ENCODE measurements at regions of chr14 and their contacts with region 1.

Region 1: GRCh38 chr14:76918751-76919543 is 92.7 kb downstream of the LRRC74A start:
- DNase-seq: peak; percentile 24
- ATAC-seq: peak; percentile 77
- H3K4me3 ChIP-seq: peak overlapping the region; percentile 9 to 61 (median 39); a peak in 3 of 6 replicates
- H3K27ac ChIP-seq: no peak overlapping the region
- H3K4me1 ChIP-seq: peaks cover 53% of the 10 kb centered on the region
- H3K27me3 ChIP-seq: peaks cover 3 to 18% of the 10 kb centered on the region in 2 experiments; a peak in 3 of 5 replicates
- CTCF ChIP-seq: no peak
- EP300 ChIP-seq: no peak
- POLR2A ChIP-seq: no peak
- RAD21 ChIP-seq: no peak

Region 2: DNA sequence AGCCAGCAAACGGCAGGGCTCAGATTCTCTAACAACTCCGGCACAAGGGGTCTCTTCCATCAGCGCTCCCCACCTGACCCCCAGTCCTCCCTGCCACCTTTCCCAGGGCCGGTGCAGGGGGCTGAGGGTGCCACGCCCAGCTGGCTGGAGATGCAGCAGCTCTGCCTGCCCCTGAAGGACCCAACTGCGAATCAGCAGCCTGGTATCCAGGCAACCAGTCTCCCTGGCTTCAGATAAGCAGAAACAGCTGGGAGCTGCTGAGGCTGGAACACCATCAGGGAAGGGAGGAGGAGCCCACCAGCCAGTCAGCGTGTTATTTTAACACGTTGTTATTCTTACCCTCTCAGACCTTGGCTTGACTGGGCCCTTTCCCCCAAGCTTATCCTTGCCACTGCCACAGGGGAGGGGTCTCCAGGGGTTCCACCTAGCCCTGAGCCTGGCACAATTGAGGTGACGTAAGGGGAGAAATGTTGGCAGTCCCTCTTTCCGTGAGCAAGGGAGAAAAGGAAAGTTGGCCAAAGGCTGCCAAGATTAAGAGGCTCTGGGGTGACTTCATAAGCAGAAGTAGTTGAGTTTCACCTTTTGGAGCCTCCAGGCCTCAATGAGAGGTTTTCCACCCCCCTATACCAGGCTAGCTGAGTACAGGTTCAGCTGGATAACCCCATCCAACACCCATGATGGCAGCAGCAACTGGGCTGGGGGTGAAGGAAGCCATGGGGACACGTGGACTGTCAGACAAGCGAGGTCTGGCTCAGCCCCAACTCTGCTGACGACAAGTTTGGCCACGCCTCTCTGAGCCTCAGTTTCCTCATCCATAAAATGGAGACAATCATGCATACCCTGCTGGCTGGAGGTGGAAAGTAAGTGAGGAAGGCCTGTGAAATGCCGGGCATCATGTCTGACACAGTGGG is 18.5 kb after region 1 on chr14:
- CTCF ChIA-PET with region 1: no interaction called
- POLR2A ChIA-PET with region 1: no interaction called
- in situ Hi-C with region 1: no loop called
- intact Hi-C with region 1: no loop called
- DNase-seq: no peak
- ATAC-seq: no peak
- H3K4me3 ChIP-seq: no peak overlapping the region
- H3K27ac ChIP-seq: no peak overlapping the region
- H3K4me1 ChIP-seq: peaks cover 13% of the 10 kb centered on the region; the same call in 1 of the 2 replicates
- H3K27me3 ChIP-seq: peaks cover 8 to 33% of the 10 kb centered on the region in 2 experiments; a peak in 3 of 5 replicates
- CTCF ChIP-seq: no peak
- EP300 ChIP-seq: no peak
- POLR2A ChIP-seq: no peak
- RAD21 ChIP-seq: no peak

Region 3: DNA sequence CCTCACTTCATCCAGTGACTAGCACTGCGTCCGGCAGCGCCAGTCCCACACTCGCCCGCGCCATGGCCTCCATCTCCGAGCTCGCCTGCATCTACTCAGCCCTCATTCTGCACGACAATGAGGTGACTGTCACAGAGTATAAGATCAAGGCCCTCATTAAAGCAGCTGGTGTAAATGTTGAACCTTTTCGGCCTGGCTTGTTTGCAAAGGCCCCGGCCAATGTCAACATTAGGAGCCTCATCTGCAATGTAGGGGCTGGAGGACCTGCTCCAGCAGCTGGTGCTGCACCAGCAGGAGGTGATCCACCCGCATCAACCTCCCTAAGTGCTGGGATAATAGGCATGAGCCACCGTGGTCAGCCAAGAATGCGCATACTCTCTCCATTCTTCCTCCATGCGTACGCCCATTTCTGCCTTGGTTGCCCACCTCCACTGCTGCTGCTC is 49.7 kb after region 1 on chr14:
- CTCF ChIA-PET with region 1: no interaction called
- POLR2A ChIA-PET with region 1: no interaction called
- in situ Hi-C with region 1: no loop called
- intact Hi-C with region 1: loop called (anchors 10 kb)
- DNase-seq: peak; percentile 92
- ATAC-seq: peak; percentile 94
- H3K4me3 ChIP-seq: peak overlapping the region in 1 of 3 experiments; percentile 50; a peak in 4 of 6 replicates
- H3K27ac ChIP-seq: peak overlapping the region; percentile 61
- H3K4me1 ChIP-seq: peaks cover 76% of the 10 kb centered on the region
- H3K27me3 ChIP-seq: no peaks in the 10 kb centered on the region
- CTCF ChIP-seq: peak; percentile 85
- EP300 ChIP-seq: peak in 1 of 2 experiments; percentile 68; a peak in 1 of 4 replicates
- POLR2A ChIP-seq: no peak
- RAD21 ChIP-seq: peak; percentile 86

Region 4: DNA sequence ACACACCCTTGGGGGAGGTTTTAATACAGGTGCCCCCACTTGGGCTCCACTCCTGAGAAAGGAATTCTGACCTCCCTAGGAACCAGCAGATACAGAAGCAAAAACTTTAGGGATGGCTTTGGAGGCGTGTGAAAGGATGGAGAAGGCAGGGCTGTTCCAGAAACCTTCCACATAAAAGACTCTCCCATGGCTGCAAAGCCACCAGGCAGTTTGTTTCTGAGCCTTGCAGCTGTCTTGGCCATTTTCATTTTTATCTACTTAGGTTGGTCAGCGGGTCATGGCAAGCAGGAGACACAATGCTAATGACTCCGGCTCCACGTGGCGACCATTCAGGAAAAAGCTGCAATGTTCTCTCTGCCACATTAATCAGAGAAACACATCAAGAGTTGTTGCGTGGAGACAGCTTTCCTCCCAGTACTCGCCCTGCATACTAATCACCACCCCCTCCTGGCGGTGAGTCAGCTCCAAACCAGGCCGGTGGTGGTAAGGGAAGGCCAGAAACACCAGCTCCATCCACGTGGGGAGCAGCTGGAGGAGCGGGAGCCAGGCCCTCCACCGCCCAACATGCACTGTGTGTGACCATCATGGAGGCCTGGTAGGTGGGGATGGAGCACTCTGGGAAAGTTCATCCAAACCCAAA is 140.4 kb after region 1 on chr14:
- CTCF ChIA-PET with region 1: interaction called, 12 read pairs
- POLR2A ChIA-PET with region 1: no interaction called
- in situ Hi-C with region 1: loop called (anchors 5 kb)
- intact Hi-C with region 1: no loop called
- DNase-seq: peak; percentile 51
- ATAC-seq: peak; percentile 99
- H3K4me3 ChIP-seq: no peak overlapping the region
- H3K27ac ChIP-seq: no peak overlapping the region
- H3K4me1 ChIP-seq: peaks cover 15% of the 10 kb centered on the region; the same call in 1 of the 2 replicates
- H3K27me3 ChIP-seq: peaks cover 2 to 25% of the 10 kb centered on the region in 2 experiments; a peak in 2 of 5 replicates
- CTCF ChIP-seq: peak; percentile 69
- EP300 ChIP-seq: no peak
- POLR2A ChIP-seq: no peak
- RAD21 ChIP-seq: peak; percentile 60